WTC11 (cell line): ENCODE measurements at regions of chr13 and their contacts with region 1.

Region 1: GRCh38 chr13:74287724-74288169 is 153.5 kb upstream of the KLF12 start:
- DNase-seq: peak; percentile 52
- ATAC-seq: no peak; the same call in 1 of the 2 replicates
- H3K4me3 Mint-ChIP-seq: 0 out of 2 replicates have a peak overlapping the region, but pooled peaks have one; percentile 34
- H3K27ac Mint-ChIP-seq: no peak overlapping the region
- H3K4me1 Mint-ChIP-seq: peaks cover 46% of the 10 kb centered on the region
- H3K27me3 Mint-ChIP-seq: no peaks in the 10 kb centered on the region
- CTCF ChIP-seq: no peak

Region 2: DNA sequence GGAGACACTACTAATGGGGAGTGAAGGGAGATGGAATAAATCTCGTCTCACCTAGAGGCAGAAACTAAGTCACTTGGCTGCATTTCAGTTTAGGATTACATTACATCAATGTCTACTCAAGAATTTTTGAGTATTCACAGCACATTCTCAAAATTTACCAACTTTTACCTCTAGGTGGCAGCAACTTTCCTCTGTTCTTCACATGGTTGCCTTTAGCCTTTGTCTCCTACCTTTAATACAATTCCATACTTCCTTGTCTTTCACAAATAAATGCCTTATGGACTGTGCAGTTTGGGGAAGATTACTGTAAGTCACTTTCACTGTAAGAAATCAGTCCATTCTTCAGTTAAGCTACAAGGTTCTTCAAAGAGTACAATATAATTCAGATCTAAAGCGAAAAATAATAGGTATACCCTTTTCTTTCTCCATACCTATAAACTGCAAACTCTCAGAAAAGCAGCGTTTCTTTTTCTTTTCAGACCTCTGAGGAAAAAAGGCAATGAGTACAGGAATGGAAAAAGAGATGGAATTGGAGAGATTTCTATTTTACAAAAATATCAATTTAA is 532.9 kb before region 1 on chr13:
- CTCF ChIA-PET with region 1: interaction called, 12 read pairs
- POLR2A ChIA-PET with region 1: no interaction called
- DNase-seq: no peak
- ATAC-seq: peak; percentile 76
- H3K4me3 Mint-ChIP-seq: no peak overlapping the region
- H3K27ac Mint-ChIP-seq: no peak overlapping the region
- H3K4me1 Mint-ChIP-seq: peaks cover 27% of the 10 kb centered on the region
- H3K27me3 Mint-ChIP-seq: no peaks in the 10 kb centered on the region
- CTCF ChIP-seq: peak; percentile 45; the same call in 1 of the 2 replicates

Region 3: GRCh38 chr13:73765651-73766384 is 521.9 kb before region 1 on chr13:
- CTCF ChIA-PET with region 1: interaction called, 21 read pairs
- POLR2A ChIA-PET with region 1: no interaction called
- DNase-seq: peak; percentile 77
- ATAC-seq: peak; percentile 84
- H3K4me3 Mint-ChIP-seq: peak overlapping the region; percentile 65
- H3K27ac Mint-ChIP-seq: peak overlapping the region; percentile 99
- H3K4me1 Mint-ChIP-seq: peaks cover 71% of the 10 kb centered on the region
- H3K27me3 Mint-ChIP-seq: no peaks in the 10 kb centered on the region
- CTCF ChIP-seq: no peak

Region 4: GRCh38 chr13:73849292-73849691 is 438.5 kb before region 1 on chr13:
- CTCF ChIA-PET with region 1: interaction called, 31 read pairs
- POLR2A ChIA-PET with region 1: no interaction called
- DNase-seq: peak; percentile 35
- ATAC-seq: peak; percentile 94
- H3K4me3 Mint-ChIP-seq: no peak overlapping the region; the same call in 1 of the 2 replicates
- H3K27ac Mint-ChIP-seq: peak overlapping the region; percentile 97
- H3K4me1 Mint-ChIP-seq: peaks cover 33% of the 10 kb centered on the region
- H3K27me3 Mint-ChIP-seq: no peaks in the 10 kb centered on the region
- CTCF ChIP-seq: 0 out of 2 replicates have a peak, but pooled peaks have one; percentile 18

Region 5: GRCh38 chr13:74133657-74134201 is 154.0 kb before region 1 on chr13:
- CTCF ChIA-PET with region 1: interaction called, 17 read pairs
- POLR2A ChIA-PET with region 1: interaction called, 9 read pairs
- DNase-seq: peak; percentile 83
- ATAC-seq: peak; percentile 59
- H3K4me3 Mint-ChIP-seq: peak overlapping the region; percentile 99
- H3K27ac Mint-ChIP-seq: peak overlapping the region; percentile 98
- H3K4me1 Mint-ChIP-seq: peaks cover 27% of the 10 kb centered on the region
- H3K27me3 Mint-ChIP-seq: peaks cover 7% of the 10 kb centered on the region; the same call in 1 of the 2 replicates
- CTCF ChIP-seq: no peak

Region 6: GRCh38 chr13:74301258-74301935 is 13.7 kb after region 1 on chr13:
- CTCF ChIA-PET with region 1: interaction called, 11 read pairs
- POLR2A ChIA-PET with region 1: no interaction called
- DNase-seq: peak; percentile 17
- ATAC-seq: peak; percentile 87
- H3K4me3 Mint-ChIP-seq: peak overlapping the region; percentile 21
- H3K27ac Mint-ChIP-seq: peak overlapping the region; percentile 60
- H3K4me1 Mint-ChIP-seq: peaks cover 36% of the 10 kb centered on the region
- H3K27me3 Mint-ChIP-seq: no peaks in the 10 kb centered on the region
- CTCF ChIP-seq: no peak

Region 7: DNA sequence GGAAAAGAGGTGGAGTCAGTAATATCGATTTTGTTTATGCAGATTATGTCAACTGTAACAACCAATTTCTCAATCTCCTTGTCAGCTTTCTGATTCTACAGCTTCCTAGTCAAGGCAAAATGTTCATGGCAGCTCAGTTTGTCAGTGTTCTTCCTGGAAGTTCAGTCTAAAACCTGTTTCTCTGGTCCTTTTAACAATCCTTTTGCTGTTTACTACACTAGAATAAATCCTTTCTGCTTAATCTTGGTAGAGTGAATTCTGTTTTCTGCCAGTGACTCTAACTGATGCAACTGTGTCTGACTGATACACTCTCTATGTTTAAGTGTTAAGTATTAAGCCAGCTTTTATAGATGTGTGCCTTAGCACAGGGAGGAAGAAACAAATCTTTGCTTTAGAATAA is 363.4 kb after region 1 on chr13:
- CTCF ChIA-PET with region 1: no interaction called
- POLR2A ChIA-PET with region 1: no interaction called
- DNase-seq: no peak
- ATAC-seq: no peak
- H3K4me3 Mint-ChIP-seq: no peak overlapping the region
- H3K27ac Mint-ChIP-seq: no peak overlapping the region
- H3K4me1 Mint-ChIP-seq: no peaks in the 10 kb centered on the region; the same call in 1 of the 2 replicates
- H3K27me3 Mint-ChIP-seq: no peaks in the 10 kb centered on the region
- CTCF ChIP-seq: no peak